Gastrocnemius medialis (tissue), 4 donors: ENCODE measurements at regions of chr3 and their contacts with region 1.

Region 1: GRCh38 chr3:140898340-140899180 is 43.1 kb upstream of the SLC25A36 start:
- DNase-seq: no peak
- ATAC-seq: peak; percentile 68 to 72
- H3K4me3 ChIP-seq: no peak overlapping the region
- H3K27ac ChIP-seq: no peak overlapping the region
- H3K4me1 ChIP-seq: peaks cover 7 to 11% of the 10 kb centered on the region in 2 donors
- H3K27me3 ChIP-seq: no peaks in the 10 kb centered on the region
- CTCF ChIP-seq: peak; percentile 24 to 53 (median 48)
- POLR2A ChIP-seq: no peak

Region 2: GRCh38 chr3:140972833-140973232 is 74.3 kb after region 1 on chr3:
- in situ Hi-C with region 1: loop called in 1 of 4 experiments (anchors 10 kb)
- intact Hi-C with region 1: loop called (anchors 1 kb)
- DNase-seq: no peak
- ATAC-seq: no peak
- H3K4me3 ChIP-seq: no peak overlapping the region
- H3K27ac ChIP-seq: no peak overlapping the region
- H3K4me1 ChIP-seq: no peaks in the 10 kb centered on the region
- H3K27me3 ChIP-seq: no peaks in the 10 kb centered on the region
- CTCF ChIP-seq: peak in 2 of 5 experiments; percentile 27 to 37
- POLR2A ChIP-seq: no peak